Colonic mucosa (tissue), 4 donors: ENCODE measurements at regions of chr10 and their contacts with region 1.

Region 1: GRCh38 chr10:132637477-132638129 is 100.0 kb downstream of the INPP5A start:
- DNase-seq: no peak
- H3K4me3 ChIP-seq: no peak overlapping the region
- H3K27ac ChIP-seq: no peak overlapping the region
- H3K4me1 ChIP-seq: peaks cover 12% of the 10 kb centered on the region
- H3K27me3 ChIP-seq: no peaks in the 10 kb centered on the region
- CTCF ChIP-seq: peak; percentile 67

Region 2: DNA sequence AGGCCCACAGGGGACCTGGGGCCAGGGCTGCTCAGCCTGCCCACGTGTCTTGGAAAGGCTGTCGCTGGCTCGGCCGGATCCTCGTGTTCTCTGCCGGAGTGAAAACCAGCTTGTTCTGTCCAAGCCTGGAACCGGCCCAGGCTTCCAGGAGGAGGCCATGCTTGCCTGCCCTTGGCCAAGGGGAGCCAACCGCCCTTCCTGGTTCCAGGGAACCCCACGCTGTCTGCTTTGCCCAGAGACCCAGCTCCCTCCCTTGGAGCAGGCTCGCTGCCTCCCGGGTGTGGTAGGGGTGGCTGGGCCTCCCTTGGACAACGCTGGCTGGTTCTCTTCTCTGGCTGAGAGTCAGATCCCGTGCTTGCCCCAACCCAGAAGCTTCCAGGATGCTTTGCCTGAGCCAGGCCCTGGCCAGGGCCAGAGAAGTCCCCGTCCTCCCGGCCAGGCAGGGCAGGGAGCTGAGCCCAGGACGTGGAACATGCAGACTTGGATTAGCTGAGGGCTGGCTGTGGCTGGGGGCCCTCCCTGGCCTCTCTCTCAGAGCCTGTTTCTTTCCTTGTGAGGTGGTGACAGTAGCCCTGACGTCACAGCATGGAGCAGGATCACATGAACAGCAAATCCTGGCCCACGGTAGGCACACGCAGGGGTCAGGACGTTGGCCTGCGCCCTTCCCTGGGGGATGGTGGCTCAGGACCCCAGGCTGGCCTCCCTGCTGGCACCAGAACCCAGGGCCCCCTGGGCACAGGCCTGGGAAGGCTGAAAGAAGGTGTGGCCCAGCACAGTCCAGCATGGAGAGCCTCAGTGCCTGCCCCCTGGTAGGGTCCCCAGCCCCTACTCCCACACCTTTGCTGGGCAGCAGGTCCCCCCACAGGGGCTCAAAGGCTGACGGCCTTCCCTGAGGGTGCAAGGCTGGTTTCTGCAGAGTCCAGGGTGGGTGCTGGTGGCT is 173.1 kb before region 1 on chr10:
- intact Hi-C with region 1: no loop called
- DNase-seq: peak; percentile 62
- H3K4me3 ChIP-seq: no peak overlapping the region
- H3K27ac ChIP-seq: peak overlapping the region; percentile 67
- H3K4me1 ChIP-seq: peaks cover 41% of the 10 kb centered on the region
- H3K27me3 ChIP-seq: no peaks in the 10 kb centered on the region
- CTCF ChIP-seq: no peak

Region 3: DNA sequence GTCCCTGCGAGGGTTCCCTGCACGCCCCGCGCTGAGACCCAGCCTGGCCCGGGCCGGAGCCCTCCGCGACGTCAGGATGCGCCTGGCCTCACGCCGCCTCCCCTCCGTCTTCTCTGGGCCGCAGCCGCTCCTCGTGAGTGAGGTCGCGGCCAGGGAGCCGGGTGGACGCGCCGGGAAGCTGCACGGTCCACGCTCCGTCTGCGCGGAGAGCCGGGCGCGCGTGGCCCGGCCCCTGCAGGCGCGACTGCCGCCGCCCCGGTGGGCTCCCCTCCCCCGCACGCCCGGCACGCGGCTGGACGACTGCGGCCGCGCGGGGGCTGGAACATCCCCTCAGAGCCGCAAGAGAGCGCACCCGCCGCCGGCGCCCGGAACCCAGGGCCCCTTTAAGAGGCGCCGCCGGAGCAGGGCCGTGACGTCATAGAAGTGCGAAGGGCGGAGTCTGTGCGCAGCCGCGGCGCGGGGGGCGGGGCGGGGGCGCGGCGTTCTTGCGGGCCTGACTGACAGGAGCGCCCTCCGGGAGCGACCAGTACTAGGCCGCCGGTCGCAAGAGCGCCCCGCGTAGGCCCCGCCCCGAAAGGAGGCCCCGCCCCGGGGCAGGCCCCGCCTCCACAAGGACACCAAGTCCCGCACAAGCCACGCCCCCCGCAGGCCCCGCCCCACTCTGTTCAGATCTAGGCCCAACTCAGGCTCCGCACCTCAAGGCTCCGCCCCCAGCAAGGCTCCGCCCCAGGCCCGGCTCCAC is 100.5 kb before region 1 on chr10:
- intact Hi-C with region 1: loop called (anchors 5 kb)
- DNase-seq: peak; percentile 100
- H3K4me3 ChIP-seq: peak overlapping the region; percentile 55
- H3K27ac ChIP-seq: peak overlapping the region; percentile 77
- H3K4me1 ChIP-seq: peaks cover 11% of the 10 kb centered on the region
- H3K27me3 ChIP-seq: no peaks in the 10 kb centered on the region
- CTCF ChIP-seq: no peak